Heart left ventricle (tissue), 16 donors: ENCODE measurements at regions of chr22 and their contacts with region 1.

Region 1: DNA sequence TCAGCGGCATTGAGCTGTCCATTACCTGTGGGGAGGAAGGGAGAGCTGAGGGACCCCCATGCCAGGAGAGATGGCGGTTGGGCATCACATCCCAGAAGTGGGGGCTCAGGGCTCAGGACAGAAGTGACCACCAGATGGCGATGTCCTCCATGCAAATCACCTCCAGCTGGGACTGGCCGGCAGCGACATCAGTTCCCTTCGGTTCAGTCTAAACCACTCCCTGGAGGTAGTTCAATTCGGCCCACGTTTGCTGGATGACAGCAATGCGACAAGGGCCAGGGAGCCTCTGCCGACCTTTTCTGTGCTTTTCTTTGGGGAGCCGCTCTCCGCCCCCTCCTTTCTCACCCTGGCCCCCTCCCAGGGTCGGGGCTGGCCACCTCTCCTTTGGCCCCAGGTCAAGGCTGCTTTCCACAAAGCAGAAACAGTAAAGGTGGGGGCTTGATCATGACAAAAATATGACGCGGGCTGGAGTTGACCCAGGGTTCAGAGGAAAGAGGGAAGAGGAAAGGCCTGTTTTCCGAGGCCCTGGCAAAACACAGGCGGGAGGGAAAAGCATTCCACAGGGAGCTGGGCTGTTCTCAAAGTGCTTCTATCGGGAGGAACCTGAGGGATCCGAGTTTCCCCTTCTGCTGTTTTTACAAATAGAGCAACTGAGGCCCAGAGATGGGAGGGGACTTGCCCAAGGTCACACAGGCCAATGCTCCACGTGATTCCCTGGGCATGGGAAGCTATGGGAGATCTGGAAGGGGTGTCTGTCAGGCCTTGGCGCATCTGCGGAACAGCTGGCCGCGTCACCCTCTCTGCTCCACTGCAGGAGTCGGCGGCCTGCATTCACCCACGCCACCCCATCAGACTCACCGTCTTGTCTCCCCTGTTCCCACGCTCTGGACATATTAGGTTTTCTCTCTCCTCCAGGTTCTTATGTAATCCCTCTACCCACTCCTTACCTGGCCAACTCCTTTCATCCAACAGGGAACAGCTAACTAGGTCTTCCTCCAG is 54.7 kb downstream of the FBXO7 start:
- DNase-seq: peak; percentile 88 to 92 (median 90)
- ATAC-seq: peak; percentile 62 to 75 (median 65)
- H3K4me3 ChIP-seq: peak overlapping the region in 2 of 12 donors; percentile 13 to 24
- H3K27ac ChIP-seq: peak overlapping the region; percentile 50 to 94 (median 80)
- H3K4me1 ChIP-seq: peaks cover 5 to 58% (median 50%) of the 10 kb centered on the region in 12 donors
- H3K27me3 ChIP-seq: no peaks in the 10 kb centered on the region
- CTCF ChIP-seq: peak; percentile 79 to 94 (median 90)
- POLR2A ChIP-seq: no peak

Region 2: DNA sequence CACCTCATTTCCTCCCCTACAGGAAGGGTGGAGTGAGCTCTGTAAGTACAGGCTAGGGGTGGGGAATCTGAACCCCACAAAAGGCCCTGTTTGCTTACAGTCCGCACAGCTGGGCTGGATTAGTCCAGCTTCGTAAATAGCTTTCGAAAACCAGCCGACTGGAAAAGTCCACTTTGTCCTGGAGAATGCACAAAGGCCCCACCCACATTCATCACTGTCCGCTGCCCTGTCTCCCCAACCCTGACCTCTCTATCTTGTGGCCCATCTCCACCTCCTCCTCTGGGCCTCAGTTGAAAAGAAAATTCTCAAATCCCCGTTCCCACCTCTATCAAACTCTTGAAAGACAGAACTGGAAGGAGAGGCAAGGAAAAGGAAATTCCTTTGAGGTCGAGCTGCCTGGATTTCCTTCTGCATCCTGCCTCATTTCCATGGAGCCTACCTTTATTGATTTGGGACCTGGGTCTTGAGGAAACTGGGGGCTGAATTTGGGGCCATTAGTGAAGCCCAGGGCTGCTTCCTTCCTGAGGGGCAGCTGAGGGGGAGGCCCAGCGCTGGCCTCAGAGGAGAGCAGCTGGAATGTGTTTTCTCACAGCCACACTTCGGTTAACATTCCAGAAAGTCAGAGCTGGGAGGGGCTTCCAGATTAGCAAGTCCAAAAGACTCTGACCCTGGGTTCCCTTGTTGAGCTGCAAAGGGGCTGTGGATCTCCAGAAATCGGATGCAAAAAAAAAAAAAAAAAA is 92.9 kb after region 1 on chr22:
- intact Hi-C with region 1: loop called in 7 of 10 experiments (anchors 1 to 5 kb)
- DNase-seq: peak in 4 of 5 donors; percentile 58 to 76 (median 74)
- ATAC-seq: peak; percentile 49 to 66 (median 62)
- H3K4me3 ChIP-seq: no peak overlapping the region
- H3K27ac ChIP-seq: peak overlapping the region; percentile 76 to 98 (median 90)
- H3K4me1 ChIP-seq: peaks cover 17 to 90% (median 64%) of the 10 kb centered on the region in 12 donors
- H3K27me3 ChIP-seq: no peaks in the 10 kb centered on the region
- CTCF ChIP-seq: no peak
- POLR2A ChIP-seq: no peak

Region 3: DNA sequence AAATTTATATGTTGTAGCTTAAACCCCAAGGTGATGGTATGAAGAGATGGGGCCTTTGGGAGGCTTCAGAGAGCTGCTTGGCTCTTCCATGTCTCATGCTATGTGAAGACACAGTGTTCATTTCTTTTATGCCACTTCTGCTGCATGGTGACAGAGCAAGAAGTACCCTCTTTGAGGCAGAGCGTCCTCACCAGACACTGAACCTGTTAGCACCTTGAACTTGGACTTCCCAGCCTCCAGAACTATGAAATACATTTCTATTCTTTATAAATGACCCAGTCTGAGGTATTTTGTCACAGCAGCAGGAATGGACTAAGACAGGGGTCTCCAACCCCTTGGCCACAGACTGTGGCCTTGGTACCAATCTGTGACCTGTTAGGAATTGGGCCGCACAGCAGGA is 125.8 kb after region 1 on chr22:
- intact Hi-C with region 1: loop called in 7 of 10 experiments (anchors 2 to 5 kb)
- DNase-seq: no peak
- ATAC-seq: no peak
- H3K4me3 ChIP-seq: no peak overlapping the region
- H3K27ac ChIP-seq: no peak overlapping the region
- H3K4me1 ChIP-seq: peaks cover 0 to 7% (median 1%) of the 10 kb centered on the region in 12 donors
- H3K27me3 ChIP-seq: no peaks in the 10 kb centered on the region
- CTCF ChIP-seq: no peak
- POLR2A ChIP-seq: no peak

Region 4: GRCh38 chr22:32796865-32797573 is 267.7 kb after region 1 on chr22:
- intact Hi-C with region 1: loop called (anchors 1 to 5 kb)
- DNase-seq: peak; percentile 77 to 87 (median 84)
- ATAC-seq: peak; percentile 28 to 74 (median 66)
- H3K4me3 ChIP-seq: no peak overlapping the region
- H3K27ac ChIP-seq: peak overlapping the region in 6 of 12 donors; percentile 11 to 51 (median 29)
- H3K4me1 ChIP-seq: peaks cover 0 to 37% (median 13%) of the 10 kb centered on the region in 12 donors
- H3K27me3 ChIP-seq: peaks cover 0 to 13% (median 0%) of the 10 kb centered on the region in 9 donors
- CTCF ChIP-seq: peak; percentile 82 to 93 (median 91)
- POLR2A ChIP-seq: no peak

Region 5: DNA sequence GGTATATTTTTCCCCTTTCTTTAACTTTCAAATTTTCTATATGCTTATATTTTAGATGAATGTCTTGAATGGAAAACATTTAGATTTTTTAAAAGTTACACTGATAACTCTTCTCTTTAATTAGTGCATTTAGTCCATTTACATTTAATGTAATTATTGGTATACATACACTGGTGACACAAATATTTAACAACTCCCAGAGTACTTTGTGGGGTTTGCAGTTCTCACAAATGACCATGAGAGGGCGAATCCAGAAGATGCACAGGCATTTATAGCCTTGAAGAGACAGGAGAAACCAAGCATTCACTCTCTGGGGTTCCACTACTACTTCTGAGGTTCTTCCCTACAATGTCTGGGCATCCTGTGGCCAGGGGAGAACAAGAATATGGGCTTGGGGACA is 397.3 kb after region 1 on chr22:
- intact Hi-C with region 1: loop called in 1 of 10 experiments (anchors 5 kb)
- DNase-seq: no peak
- ATAC-seq: peak in 2 of 4 donors; percentile 24 to 41
- H3K4me3 ChIP-seq: no peak overlapping the region
- H3K27ac ChIP-seq: no peak overlapping the region
- H3K4me1 ChIP-seq: no peaks in the 10 kb centered on the region
- H3K27me3 ChIP-seq: no peaks in the 10 kb centered on the region
- CTCF ChIP-seq: peak; percentile 55 to 81 (median 64)
- POLR2A ChIP-seq: no peak

Region 6: DNA sequence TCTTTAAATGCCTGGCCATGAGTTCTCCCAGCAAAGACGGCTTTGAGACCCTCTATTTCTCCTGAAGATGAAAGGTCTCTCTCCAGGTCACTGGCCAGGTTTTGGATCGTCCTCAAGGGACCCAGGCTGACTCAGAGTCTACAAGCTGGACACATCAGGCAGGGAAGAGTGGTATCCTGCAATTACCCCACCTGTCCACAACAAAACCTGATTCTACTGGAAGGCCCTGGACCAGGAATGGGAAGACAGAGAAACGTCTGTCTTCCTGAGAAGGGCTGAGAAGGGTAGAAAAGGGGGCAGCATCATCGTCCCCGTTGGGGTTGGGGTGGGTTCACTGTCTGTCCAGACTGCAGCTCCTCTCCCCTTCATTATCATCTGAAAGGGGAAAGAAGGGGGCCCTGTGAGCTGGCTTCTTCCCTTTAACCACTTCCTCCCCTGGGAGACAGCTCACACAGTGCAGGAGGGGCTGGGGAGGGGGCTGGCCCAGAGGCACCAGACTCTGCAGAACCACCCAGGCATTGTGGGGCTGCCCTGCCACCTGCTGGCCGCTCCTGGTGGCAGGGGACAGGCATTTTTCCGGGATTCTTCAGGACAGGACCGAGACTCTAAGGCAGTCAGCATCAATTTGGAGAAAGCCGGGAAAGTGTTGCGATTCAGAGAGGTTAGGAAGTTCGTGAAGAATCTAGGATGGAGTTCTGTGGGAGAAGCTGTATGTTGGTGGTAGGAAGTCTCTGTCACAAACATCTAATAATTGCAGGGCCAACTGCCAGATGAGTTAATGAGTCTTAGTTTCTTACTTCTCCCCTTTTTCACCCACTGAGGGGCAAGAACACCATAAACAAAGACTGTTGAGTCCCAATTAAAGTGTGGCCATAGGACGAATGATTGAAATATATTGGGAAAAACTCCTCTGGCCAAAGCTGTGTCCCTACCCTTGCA is 471.3 kb after region 1 on chr22:
- intact Hi-C with region 1: loop called (anchors 1 to 2 kb)
- DNase-seq: peak; percentile 45 to 77 (median 54)
- ATAC-seq: peak in 3 of 4 donors; percentile 75 to 79 (median 78)
- H3K4me3 ChIP-seq: no peak overlapping the region
- H3K27ac ChIP-seq: no peak overlapping the region
- H3K4me1 ChIP-seq: peaks cover 0 to 14% (median 5%) of the 10 kb centered on the region in 12 donors
- H3K27me3 ChIP-seq: no peaks in the 10 kb centered on the region
- CTCF ChIP-seq: peak; percentile 84 to 98 (median 94)
- POLR2A ChIP-seq: no peak